Caco-2 (cell line): ENCODE measurements at regions of chr13 and their contacts with region 1.

Region 1: DNA sequence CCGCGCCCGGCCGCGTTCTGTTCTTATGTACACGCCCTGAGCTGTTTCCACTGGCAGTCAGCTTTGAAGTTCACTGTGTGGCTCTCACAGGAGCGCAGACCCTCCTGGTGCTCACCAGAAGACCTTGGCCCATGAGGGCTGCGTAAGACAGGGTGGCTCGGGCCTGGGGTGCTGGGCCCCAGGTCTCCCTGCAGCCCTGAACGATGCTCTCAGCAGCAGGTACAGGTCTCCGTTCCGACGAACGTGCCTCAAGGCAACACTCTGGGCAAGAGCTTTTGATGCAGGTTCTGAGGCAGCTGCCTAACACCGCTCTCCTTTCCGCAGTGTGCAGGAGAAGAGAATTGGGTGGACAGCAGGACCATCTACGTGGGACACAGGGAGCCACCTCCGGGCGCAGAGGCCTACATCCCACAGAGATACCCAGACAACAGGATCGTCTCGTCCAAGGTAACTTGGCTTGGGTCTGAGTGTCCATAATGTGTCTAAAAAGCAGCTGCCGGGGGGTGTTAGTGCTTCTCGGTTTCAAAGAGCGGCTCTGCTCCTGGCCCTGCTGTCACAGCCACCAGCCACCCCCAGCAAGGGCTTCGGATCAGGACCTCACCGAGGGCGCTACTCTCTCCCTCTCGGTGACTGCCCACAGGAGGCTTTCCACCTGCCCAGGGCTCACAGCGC is 95.1 kb downstream of the ATP11A start:
- DNase-seq: no peak
- H3K4me3 ChIP-seq: no peak overlapping the region
- H3K4me3 Mint-ChIP-seq: no peak overlapping the region
- H3K27ac Mint-ChIP-seq: no peak overlapping the region
- H3K4me1 ChIP-seq: no peaks in the 10 kb centered on the region
- H3K4me1 Mint-ChIP-seq: no peaks in the 10 kb centered on the region
- H3K27me3 ChIP-seq: no peaks in the 10 kb centered on the region
- H3K27me3 Mint-ChIP-seq: no peaks in the 10 kb centered on the region
- CTCF ChIP-seq: no peak

Region 2: GRCh38 chr13:112664501-112665203 is 120.3 kb before region 1 on chr13:
- CTCF ChIA-PET with region 1: no interaction called
- POLR2A ChIA-PET with region 1: no interaction called
- intact Hi-C with region 1: no loop called
- DNase-seq: no peak
- H3K4me3 ChIP-seq: no peak overlapping the region
- H3K4me3 Mint-ChIP-seq: no peak overlapping the region
- H3K27ac Mint-ChIP-seq: no peak overlapping the region
- H3K4me1 ChIP-seq: 0 out of 2 replicates have a peak, but pooled peaks cover under 1% of the 10 kb centered on the region
- H3K4me1 Mint-ChIP-seq: no peaks in the 10 kb centered on the region
- H3K27me3 ChIP-seq: no peaks in the 10 kb centered on the region
- H3K27me3 Mint-ChIP-seq: no peaks in the 10 kb centered on the region
- CTCF ChIP-seq: no peak

Region 3: GRCh38 chr13:112744476-112745021 is 40.4 kb before region 1 on chr13:
- CTCF ChIA-PET with region 1: no interaction called
- POLR2A ChIA-PET with region 1: no interaction called
- intact Hi-C with region 1: loop called (anchors 5 kb)
- DNase-seq: no peak
- H3K4me3 ChIP-seq: no peak overlapping the region
- H3K4me3 Mint-ChIP-seq: no peak overlapping the region
- H3K27ac Mint-ChIP-seq: no peak overlapping the region
- H3K4me1 ChIP-seq: no peaks in the 10 kb centered on the region
- H3K4me1 Mint-ChIP-seq: peaks cover 24% of the 10 kb centered on the region
- H3K27me3 ChIP-seq: no peaks in the 10 kb centered on the region
- H3K27me3 Mint-ChIP-seq: no peaks in the 10 kb centered on the region
- CTCF ChIP-seq: no peak